T-cell (primary cell): ENCODE measurements at regions of chrX and their contacts with region 1.

Region 1: DNA sequence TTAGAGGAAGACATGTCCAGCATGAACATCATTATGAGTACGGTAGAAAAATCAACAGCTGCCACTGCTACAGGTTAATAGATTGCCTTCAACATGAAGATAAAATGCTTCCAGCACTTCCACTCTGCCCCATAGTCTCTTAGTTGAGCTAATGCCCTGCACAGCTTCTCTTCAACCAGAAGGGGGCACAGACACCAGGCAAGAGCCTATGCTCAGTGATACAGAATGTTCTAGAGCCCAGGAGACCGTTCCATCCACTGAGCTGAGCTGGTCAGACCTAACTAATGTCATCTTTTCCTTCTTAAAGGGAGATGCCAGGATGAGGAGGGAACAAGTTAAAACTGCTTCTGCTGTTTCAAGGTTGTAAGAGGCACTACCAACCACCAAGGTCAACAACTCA is 42.2 kb downstream of the SMIM10L2A start:
- DNase-seq: peak in 1 of 35 experiments; percentile 10
- ATAC-seq: no peak
- H3K4me3 ChIP-seq: no peak overlapping the region
- H3K4me3 Mint-ChIP-seq: no peak overlapping the region
- H3K27ac ChIP-seq: no peak overlapping the region
- H3K27ac Mint-ChIP-seq: no peak overlapping the region
- H3K4me1 ChIP-seq: no peaks in the 10 kb centered on the region
- H3K4me1 Mint-ChIP-seq: no peaks in the 10 kb centered on the region
- H3K27me3 ChIP-seq: peaks cover 2 to 6% of the 10 kb centered on the region in 2 experiments
- H3K27me3 Mint-ChIP-seq: peaks cover 0 to 33% of the 10 kb centered on the region in 2 donors

Region 2: GRCh38 chrX:134813697-134814096 is 650.2 kb before region 1 on chrX:
- CTCF ChIA-PET with region 1: no interaction called
- POLR2A ChIA-PET with region 1: interaction called in 1 of 2 experiments, 11 read pairs
- DNase-seq: no peak
- ATAC-seq: no peak
- H3K4me3 ChIP-seq: no peak overlapping the region
- H3K4me3 Mint-ChIP-seq: no peak overlapping the region
- H3K27ac ChIP-seq: no peak overlapping the region
- H3K27ac Mint-ChIP-seq: no peak overlapping the region
- H3K4me1 ChIP-seq: no peaks in the 10 kb centered on the region
- H3K4me1 Mint-ChIP-seq: peaks cover 0 to 15% (median 9%) of the 10 kb centered on the region in 3 donors
- H3K27me3 ChIP-seq: no peaks in the 10 kb centered on the region
- H3K27me3 Mint-ChIP-seq: peaks cover 0 to 6% of the 10 kb centered on the region in 2 donors